CD8-positive, alpha-beta T cell (primary cell): ENCODE measurements at regions of chr3 and their contacts with region 1.

Region 1: DNA sequence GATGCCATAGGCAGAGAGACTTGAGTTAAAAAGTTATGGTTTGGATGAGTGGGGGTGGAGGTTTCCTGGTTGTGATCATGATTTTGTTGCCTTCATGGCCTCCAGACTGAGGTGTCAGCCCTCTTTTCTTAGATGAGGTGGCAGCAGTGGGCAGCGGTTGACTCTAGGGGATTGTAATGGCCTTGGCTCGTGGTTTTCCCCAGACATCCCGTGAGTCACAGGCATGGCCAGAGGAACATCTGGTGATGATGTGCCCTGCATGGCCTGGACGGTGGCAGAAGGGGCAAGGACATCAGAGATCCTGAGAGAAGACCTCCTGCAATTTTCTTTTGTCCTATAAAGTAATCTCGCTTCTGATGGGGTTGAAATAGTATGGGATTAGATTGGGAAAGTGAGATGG is 12.4 kb downstream of the RETNLB start:
- DNase-seq: no peak
- ATAC-seq: no peak
- H3K4me3 ChIP-seq: no peak overlapping the region
- H3K4me3 Mint-ChIP-seq: no peak overlapping the region
- H3K27ac ChIP-seq: no peak overlapping the region
- H3K27ac Mint-ChIP-seq: no peak overlapping the region
- H3K4me1 ChIP-seq: no peaks in the 10 kb centered on the region
- H3K4me1 Mint-ChIP-seq: peaks cover 5% of the 10 kb centered on the region
- H3K27me3 ChIP-seq: no peaks in the 10 kb centered on the region
- H3K27me3 Mint-ChIP-seq: no peaks in the 10 kb centered on the region
- CTCF ChIP-seq: no peak

Region 2: DNA sequence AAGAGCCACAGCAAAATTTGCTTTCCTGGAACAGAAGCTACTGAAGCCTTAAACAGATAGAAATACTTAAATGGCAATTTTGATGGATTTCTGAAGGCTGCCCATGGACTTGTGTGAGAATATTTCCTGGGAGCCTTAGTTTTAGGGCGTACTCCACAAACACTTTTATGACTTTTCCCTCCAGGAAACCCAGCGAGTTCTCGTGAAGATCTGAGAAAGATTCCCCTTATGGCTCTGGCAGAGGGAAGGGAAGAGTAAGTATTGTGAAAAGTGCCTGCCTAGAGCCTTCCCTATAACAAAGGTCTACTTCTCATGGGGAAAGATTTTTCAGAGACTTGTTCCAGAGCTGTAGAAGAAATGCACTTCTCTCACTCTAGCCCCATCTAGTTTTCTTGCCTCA is 46.7 kb after region 1 on chr3:
- CTCF ChIA-PET with region 1: no interaction called
- POLR2A ChIA-PET with region 1: no interaction called
- intact Hi-C with region 1: no loop called
- DNase-seq: no peak
- ATAC-seq: no peak
- H3K4me3 ChIP-seq: no peak overlapping the region
- H3K4me3 Mint-ChIP-seq: no peak overlapping the region
- H3K27ac ChIP-seq: no peak overlapping the region
- H3K27ac Mint-ChIP-seq: no peak overlapping the region
- H3K4me1 ChIP-seq: no peaks in the 10 kb centered on the region
- H3K4me1 Mint-ChIP-seq: no peaks in the 10 kb centered on the region
- H3K27me3 ChIP-seq: no peaks in the 10 kb centered on the region
- H3K27me3 Mint-ChIP-seq: no peaks in the 10 kb centered on the region
- CTCF ChIP-seq: no peak

Region 3: DNA sequence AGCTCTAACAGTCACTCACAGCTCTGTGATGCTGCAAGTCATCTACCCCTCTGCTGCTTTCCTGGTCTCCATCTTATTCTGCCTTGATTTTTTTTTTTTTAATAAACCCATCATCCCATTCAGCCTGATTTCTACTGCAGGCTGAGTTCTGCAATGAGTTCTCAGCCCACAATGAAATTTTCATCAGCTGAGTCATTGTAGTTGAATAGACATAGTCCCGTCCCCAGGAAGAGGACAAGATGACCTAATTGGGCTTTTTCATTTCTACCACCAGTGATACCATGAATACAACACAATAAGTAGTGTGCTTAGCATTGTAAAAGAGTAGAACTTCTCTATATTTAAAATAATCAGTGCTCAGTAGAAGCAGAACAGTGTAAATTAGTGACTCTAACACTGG is 451.1 kb after region 1 on chr3:
- CTCF ChIA-PET with region 1: no interaction called
- POLR2A ChIA-PET with region 1: no interaction called
- intact Hi-C with region 1: loop called in 1 of 2 experiments (anchors 10 kb)
- DNase-seq: no peak
- ATAC-seq: no peak
- H3K4me3 ChIP-seq: no peak overlapping the region
- H3K4me3 Mint-ChIP-seq: no peak overlapping the region
- H3K27ac ChIP-seq: no peak overlapping the region
- H3K27ac Mint-ChIP-seq: no peak overlapping the region
- H3K4me1 ChIP-seq: no peaks in the 10 kb centered on the region
- H3K4me1 Mint-ChIP-seq: no peaks in the 10 kb centered on the region
- H3K27me3 ChIP-seq: no peaks in the 10 kb centered on the region
- H3K27me3 Mint-ChIP-seq: peaks cover 4% of the 10 kb centered on the region
- CTCF ChIP-seq: no peak